ENCODE measurements at regions of chr19 and their contacts with region 1.

Region 1: GRCh38 chr19:33406521-33407139 is 33.1 kb downstream of the CEBPG start:
- DNase-seq: peak; percentile 49
- H3K4me3 Mint-ChIP-seq: no peak overlapping the region
- H3K27ac Mint-ChIP-seq: no peak overlapping the region
- H3K4me1 Mint-ChIP-seq: peaks cover 3% of the 10 kb centered on the region
- H3K27me3 Mint-ChIP-seq: no peaks in the 10 kb centered on the region

Region 2: GRCh38 chr19:33143897-33144405 is 262.7 kb before region 1 on chr19:
- intact Hi-C with region 1: loop called (anchors 10 kb)
- DNase-seq: peak; percentile 51
- H3K4me3 Mint-ChIP-seq: no peak overlapping the region
- H3K27ac Mint-ChIP-seq: no peak overlapping the region
- H3K4me1 Mint-ChIP-seq: peaks cover 5% of the 10 kb centered on the region
- H3K27me3 Mint-ChIP-seq: peaks cover 7% of the 10 kb centered on the region

Region 3: DNA sequence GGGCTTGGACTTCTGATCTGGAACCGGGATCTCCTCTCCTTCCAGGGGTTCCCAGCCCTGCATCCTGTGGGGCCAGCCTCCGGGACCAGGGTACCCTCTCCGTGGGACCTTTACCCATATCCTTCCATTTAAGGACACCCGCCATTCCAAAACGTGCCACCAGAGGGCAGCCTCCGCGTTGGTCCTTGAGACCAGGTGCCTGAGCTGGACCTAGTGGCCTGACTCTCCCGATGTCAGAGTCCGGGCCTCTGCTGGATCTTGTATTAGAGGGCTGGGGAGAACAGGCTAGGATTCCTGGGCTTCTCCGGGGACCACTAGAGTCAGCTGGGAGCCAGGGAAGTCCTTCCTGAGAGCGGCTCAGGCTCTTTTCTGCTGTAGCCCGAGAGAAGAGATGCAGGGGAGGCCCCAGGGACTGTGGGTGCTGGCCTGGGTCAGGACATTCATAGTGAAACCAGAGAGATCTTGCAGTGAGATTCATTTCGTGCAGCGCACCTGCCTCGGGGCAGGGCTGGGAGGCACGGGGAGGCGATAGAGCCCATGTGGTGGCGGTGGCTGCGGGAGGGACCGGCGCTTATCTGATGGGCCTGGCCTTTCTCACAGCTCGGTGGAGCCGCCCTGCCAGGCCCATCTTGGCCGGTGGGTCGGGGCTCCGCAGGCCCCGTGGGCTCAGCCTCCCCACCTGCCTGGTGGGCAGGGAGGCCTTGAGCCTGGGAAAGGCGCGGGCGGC is 171.2 kb before region 1 on chr19:
- intact Hi-C with region 1: loop called (anchors 1 kb)
- DNase-seq: peak; percentile 59
- H3K4me3 Mint-ChIP-seq: no peak overlapping the region
- H3K27ac Mint-ChIP-seq: no peak overlapping the region
- H3K4me1 Mint-ChIP-seq: peaks cover 3% of the 10 kb centered on the region
- H3K27me3 Mint-ChIP-seq: peaks cover 3% of the 10 kb centered on the region